Right ventricle myocardium superior (tissue), 1 donor: ENCODE measurements at regions of chr3 and their contacts with region 1.

Region 1: GRCh38 chr3:62211675-62212429 is 161.5 kb downstream of the FEZF2 start:
- DNase-seq: no peak
- ATAC-seq: no peak

Region 2: GRCh38 chr3:62266668-62267283 is 54.9 kb after region 1 on chr3:
- intact Hi-C with region 1: no loop called
- DNase-seq: no peak
- ATAC-seq: no peak

Region 3: DNA sequence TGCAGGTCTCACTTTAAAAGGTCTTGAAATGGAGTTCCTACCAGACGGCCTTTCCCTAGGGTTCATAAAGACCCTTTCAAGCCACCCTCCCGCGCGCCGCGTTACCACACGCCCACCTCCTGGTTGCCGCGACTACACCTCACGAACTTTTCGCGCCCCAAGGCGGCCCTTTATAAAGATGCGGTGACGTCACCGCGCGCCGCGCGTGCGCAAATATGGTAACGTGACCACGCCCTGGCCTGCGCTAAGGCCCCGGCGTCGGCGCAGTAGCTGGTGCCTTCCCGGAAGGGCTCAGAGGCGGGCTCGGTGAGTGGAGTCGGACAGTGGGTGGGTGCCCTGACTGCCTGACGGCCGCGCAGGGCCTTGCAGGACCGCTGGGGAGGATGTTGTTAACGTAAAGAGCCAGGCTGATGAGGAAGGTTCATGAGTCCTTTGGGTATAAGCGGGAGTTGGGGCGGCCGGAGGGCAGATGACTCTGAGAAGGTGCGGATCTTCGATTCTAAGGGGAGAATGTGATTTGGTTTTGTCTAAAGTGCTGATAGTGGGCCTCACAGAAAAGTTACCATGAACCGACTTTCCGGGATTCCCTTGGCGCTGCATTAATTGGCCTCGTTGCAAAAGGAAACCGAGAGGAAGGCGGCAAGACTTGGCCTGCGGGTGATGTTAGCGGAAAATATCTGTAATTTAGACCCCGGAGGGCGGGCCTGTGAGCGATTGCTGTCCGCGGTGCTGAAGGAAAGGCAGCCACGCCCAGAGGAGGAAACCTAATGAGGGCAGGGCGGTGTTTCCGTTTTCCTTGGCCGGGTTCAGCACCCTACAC is 107.1 kb after region 1 on chr3:
- intact Hi-C with region 1: loop called (anchors 10 kb)
- DNase-seq: peak; percentile 91
- ATAC-seq: peak; percentile 98

Region 4: GRCh38 chr3:62538706-62539356 is 327.0 kb after region 1 on chr3:
- intact Hi-C with region 1: loop called (anchors 10 kb)
- DNase-seq: no peak
- ATAC-seq: no peak